OCI-LY7 (cell line): ENCODE measurements at regions of chr2 and their contacts with region 1.

Region 1: GRCh38 chr2:156589381-156590079 is 153.4 kb downstream of the GPD2 start:
- DNase-seq: peak; percentile 35
- H3K4me3 ChIP-seq: no peak overlapping the region
- H3K27ac ChIP-seq: no peak overlapping the region
- H3K4me1 ChIP-seq: no peaks in the 10 kb centered on the region
- CTCF ChIP-seq: peak; percentile 77

Region 2: GRCh38 chr2:156486147-156486546 is 103.4 kb before region 1 on chr2:
- CTCF ChIA-PET with region 1: no interaction called
- POLR2A ChIA-PET with region 1: no interaction called
- intact Hi-C with region 1: no loop called
- DNase-seq: no peak
- H3K4me3 ChIP-seq: no peak overlapping the region
- H3K27ac ChIP-seq: no peak overlapping the region
- H3K4me1 ChIP-seq: no peaks in the 10 kb centered on the region
- CTCF ChIP-seq: no peak

Region 3: GRCh38 chr2:157194097-157194688 is 604.7 kb after region 1 on chr2:
- CTCF ChIA-PET with region 1: no interaction called
- POLR2A ChIA-PET with region 1: no interaction called
- intact Hi-C with region 1: loop called (anchors 10 kb)
- DNase-seq: peak; percentile 47
- H3K4me3 ChIP-seq: no peak overlapping the region
- H3K27ac ChIP-seq: no peak overlapping the region
- H3K4me1 ChIP-seq: no peaks in the 10 kb centered on the region
- CTCF ChIP-seq: peak; percentile 88